A549 (cell line): ENCODE measurements at regions of chr2 and their contacts with region 1.

Region 1: DNA sequence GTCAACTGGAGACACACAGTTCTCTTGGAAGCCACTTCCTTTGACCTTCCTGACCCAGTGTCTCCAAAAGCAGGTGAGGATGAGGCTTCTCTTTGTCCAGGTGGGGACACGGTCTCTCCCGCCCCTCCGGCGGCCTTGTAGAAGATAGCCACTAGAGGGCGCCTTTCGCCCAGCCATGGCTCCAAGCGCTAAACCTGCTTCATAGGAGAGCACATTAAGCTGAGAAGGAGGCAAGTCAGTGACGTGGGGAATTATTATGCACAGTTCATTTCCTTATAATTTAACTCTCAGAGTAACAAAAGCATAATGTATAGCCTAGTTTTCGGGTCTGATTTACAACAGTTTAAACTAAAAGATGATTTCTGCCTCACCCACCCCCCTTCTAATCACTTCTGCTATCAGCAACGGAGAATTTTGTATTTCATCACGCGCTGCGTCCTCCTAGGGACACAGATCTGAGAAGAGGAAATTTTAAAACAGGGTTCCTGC is 208.7 kb downstream of the ICOS start:
- DNase-seq: peak; percentile 33 to 75
- ATAC-seq: peak; percentile 97 to 100
- H3K4me3 ChIP-seq: peak overlapping the region; percentile 45
- H3K27ac ChIP-seq: peak overlapping the region; percentile 35 to 57; a peak in 4 of 6 replicates
- H3K4me1 ChIP-seq: no peaks in the 10 kb centered on the region
- CTCF ChIP-seq: peak; percentile 96
- EP300 ChIP-seq: no peak
- POLR2A ChIP-seq: no peak
- RAD21 ChIP-seq: peak; percentile 92 to 93

Region 2: DNA sequence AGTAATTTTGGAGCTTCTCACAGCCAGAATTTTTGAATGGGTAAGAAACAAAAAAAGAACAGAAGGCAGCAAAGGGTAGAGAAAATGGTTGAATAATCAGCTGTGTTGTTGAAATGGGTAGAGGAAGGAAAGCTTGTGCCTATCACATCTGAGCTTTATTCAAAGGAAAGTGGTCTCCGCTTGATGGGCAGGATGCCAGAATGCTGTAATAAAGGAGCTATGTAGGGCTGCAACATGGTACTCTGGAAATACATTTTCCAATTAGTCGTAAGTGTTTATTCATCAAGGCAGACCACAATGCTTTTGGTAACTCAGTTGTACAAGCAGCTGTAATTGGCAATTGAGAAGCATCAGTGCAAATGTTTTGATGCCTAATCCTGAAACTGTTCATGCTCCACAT is 11.8 kb before region 1 on chr2:
- CTCF ChIA-PET with region 1: interaction called, 13 read pairs
- POLR2A ChIA-PET with region 1: no interaction called
- DNase-seq: no peak
- ATAC-seq: no peak
- H3K4me3 ChIP-seq: no peak overlapping the region
- H3K27ac ChIP-seq: no peak overlapping the region
- H3K4me1 ChIP-seq: no peaks in the 10 kb centered on the region
- CTCF ChIP-seq: no peak
- EP300 ChIP-seq: no peak
- POLR2A ChIP-seq: no peak
- RAD21 ChIP-seq: no peak

Region 3: GRCh38 chr2:204177977-204178540 is 32.8 kb after region 1 on chr2:
- CTCF ChIA-PET with region 1: interaction called, 18 read pairs
- POLR2A ChIA-PET with region 1: no interaction called
- DNase-seq: peak in 1 of 2 experiments; percentile 16
- ATAC-seq: peak; percentile 39 to 86; a peak in 4 of 6 replicates
- H3K4me3 ChIP-seq: no peak overlapping the region
- H3K27ac ChIP-seq: no peak overlapping the region
- H3K4me1 ChIP-seq: no peaks in the 10 kb centered on the region
- CTCF ChIP-seq: peak; percentile 39
- EP300 ChIP-seq: no peak
- POLR2A ChIP-seq: no peak
- RAD21 ChIP-seq: peak in 1 of 2 experiments; percentile 29; a peak in 2 of 5 replicates